ENCODE measurements at regions of chr21 and their contacts with region 1.

Region 1: DNA sequence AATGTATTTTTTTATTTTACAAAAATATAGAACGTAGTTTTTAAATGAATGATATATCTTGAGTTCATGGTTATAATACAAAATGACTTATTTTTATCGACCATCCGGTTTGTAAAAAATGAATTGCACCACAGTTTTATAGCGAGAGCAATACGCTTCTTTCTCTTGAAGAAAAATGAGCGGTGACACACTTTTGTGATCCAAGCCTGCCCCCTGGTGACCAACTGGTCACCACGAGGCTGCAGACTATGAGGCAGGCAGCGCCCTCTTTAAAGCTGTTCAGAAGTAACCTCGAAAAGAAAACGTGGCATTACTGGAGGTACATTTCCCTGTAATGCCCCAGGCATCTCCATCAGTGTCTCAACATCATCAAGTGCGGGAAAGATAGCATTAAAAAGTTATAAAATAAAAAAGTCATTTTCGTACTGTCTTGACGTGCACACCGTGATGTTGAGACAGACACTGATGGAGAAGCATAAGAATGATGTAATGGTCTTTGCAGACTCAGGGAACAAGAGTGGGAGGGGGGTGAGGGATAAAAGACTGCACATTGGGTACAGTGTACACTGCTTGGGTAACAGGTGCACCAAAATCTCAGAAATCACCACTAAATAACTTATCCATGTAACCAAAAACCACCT is 734.2 kb upstream of the ADAMTS5 start:
- DNase-seq: peak; percentile 17
- CTCF ChIP-seq: peak; percentile 79

Region 2: DNA sequence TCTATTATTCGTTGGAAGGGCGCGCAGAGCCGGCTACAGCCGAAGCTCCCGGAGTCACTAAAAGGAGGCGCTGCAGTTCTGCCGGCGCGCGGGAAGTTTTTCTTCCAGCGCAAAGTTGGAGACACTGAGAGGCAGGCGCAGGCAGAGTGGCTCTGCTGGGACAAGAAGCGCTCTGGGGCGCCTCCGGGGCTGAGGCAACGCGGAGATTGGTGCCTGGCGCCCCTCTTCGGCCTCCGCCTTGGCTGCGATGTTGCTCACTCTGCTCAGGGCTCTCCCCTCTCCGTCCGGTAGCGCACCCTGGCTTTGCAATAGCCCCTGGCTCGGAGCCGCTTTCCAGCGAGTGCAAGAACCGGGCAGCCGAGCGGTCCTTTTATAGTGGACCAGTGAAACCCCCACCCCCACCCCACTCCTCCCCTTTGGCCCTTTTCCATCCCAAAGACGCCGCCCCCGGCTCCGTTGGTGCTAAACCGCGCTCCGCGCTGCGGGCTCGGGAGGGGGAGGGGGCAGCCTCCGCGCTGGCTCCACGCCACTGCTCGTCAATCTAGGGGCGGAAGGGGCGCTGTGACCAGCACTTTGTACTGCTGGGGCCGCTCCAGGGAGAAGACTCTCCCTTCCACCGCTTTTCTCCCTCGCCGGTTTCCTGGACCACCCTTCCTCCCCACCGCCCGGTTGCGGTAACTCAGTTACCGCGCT is 855.9 kb before region 1 on chr21 and contains the start of gene ADAMTS1:
- CTCF ChIA-PET with region 1: interaction called, 11 read pairs
- POLR2A ChIA-PET with region 1: no interaction called
- DNase-seq: no peak
- CTCF ChIP-seq: no peak

Region 3: DNA sequence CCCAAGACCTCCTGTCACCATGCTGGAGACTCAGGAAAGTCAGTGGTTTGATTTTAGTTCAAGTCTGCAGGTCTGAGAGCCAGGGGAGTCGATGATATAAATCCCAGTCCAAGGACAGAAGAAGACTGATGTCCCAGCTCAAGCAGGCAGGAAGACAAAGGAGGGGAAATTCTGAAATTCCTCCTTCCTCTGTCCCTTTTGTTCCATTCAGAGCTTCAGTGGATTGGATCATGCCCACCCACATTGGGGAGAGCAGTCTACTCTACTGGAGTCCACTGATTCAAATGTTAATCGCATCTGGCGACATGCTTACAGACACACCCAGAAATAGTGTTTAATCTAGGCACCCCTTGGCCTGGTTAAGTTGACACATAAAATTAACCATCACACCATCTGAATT is 848.7 kb before region 1 on chr21:
- CTCF ChIA-PET with region 1: interaction called, 11 read pairs
- POLR2A ChIA-PET with region 1: no interaction called
- DNase-seq: no peak
- CTCF ChIP-seq: no peak